ENCODE measurements at regions of chr1 and their contacts with region 1.

Region 1: GRCh38 chr1:165313903-165314302 is 42.6 kb downstream of the LMX1A start:
- DNase-seq: no peak
- ATAC-seq: no peak
- H3K4me3 ChIP-seq: no peak overlapping the region
- H3K27ac ChIP-seq: no peak overlapping the region
- H3K4me1 ChIP-seq: no peaks in the 10 kb centered on the region
- H3K27me3 ChIP-seq: peaks cover 0 to 49% (median 31%) of the 10 kb centered on the region in 7 donors
- CTCF ChIP-seq: no peak

Region 2: GRCh38 chr1:166673722-166674121 is 1359.8 kb after region 1 on chr1:
- intact Hi-C with region 1: loop called in 1 of 10 experiments (anchors 5 kb)
- DNase-seq: no peak
- ATAC-seq: no peak
- H3K4me3 ChIP-seq: no peak overlapping the region
- H3K27ac ChIP-seq: no peak overlapping the region
- H3K4me1 ChIP-seq: no peaks in the 10 kb centered on the region
- H3K27me3 ChIP-seq: no peaks in the 10 kb centered on the region
- CTCF ChIP-seq: no peak

Measured in heart right ventricle (tissue), 16 donors.